ENCODE measurements at regions of chr1 and their contacts with region 1.

Region 1: GRCh38 chr1:46309401-46310159 is 6.1 kb downstream of the UQCRH start:
- DNase-seq: no peak
- ATAC-seq: no peak
- H3K4me3 ChIP-seq: no peak overlapping the region
- H3K27ac ChIP-seq: no peak overlapping the region
- H3K4me1 ChIP-seq: peaks cover 15 to 19% of the 10 kb centered on the region in 2 experiments; a peak in 4 of 5 replicates
- H3K27me3 ChIP-seq: no peaks in the 10 kb centered on the region
- CTCF ChIP-seq: no peak
- EP300 ChIP-seq: no peak
- POLR2A ChIP-seq: no peak
- RAD21 ChIP-seq: no peak

Region 2: DNA sequence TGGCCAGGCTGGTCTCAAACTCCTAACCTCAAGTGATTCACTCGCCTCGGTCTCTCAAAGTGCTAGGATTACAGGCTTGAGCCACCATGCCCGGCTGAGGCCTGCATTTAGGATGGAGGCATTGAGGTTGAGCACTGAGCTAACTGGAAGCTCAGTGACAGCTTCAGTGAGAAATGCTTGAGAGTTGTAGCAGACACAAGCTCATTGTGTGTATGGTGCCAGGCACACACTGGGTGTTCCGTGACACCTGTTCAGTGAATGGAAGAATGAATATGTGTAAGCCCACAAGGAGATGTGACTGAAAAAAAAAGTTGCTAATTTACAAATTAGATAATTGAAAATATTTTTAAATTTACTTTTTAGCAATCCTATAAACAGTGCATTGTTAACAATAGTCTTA is 84.6 kb before region 1 on chr1:
- CTCF ChIA-PET with region 1: no interaction called
- POLR2A ChIA-PET with region 1: no interaction called
- in situ Hi-C with region 1: no loop called
- intact Hi-C with region 1: no loop called
- DNase-seq: no peak
- ATAC-seq: no peak
- H3K4me3 ChIP-seq: no peak overlapping the region
- H3K27ac ChIP-seq: no peak overlapping the region
- H3K4me1 ChIP-seq: no peaks in the 10 kb centered on the region; a peak in 1 of 5 replicates
- H3K27me3 ChIP-seq: no peaks in the 10 kb centered on the region
- CTCF ChIP-seq: no peak
- EP300 ChIP-seq: no peak
- POLR2A ChIP-seq: no peak
- RAD21 ChIP-seq: no peak

Region 3: GRCh38 chr1:46295306-46295705 is 14.3 kb before region 1 on chr1:
- CTCF ChIA-PET with region 1: no interaction called
- POLR2A ChIA-PET with region 1: interaction called, 46 read pairs
- in situ Hi-C with region 1: no loop called
- intact Hi-C with region 1: no loop called
- DNase-seq: no peak
- ATAC-seq: no peak
- H3K4me3 ChIP-seq: no peak overlapping the region
- H3K27ac ChIP-seq: no peak overlapping the region; the same call in 2 of the 3 replicates
- H3K4me1 ChIP-seq: peaks cover 4 to 11% of the 10 kb centered on the region in 2 experiments; a peak in 3 of 5 replicates
- H3K27me3 ChIP-seq: no peaks in the 10 kb centered on the region
- CTCF ChIP-seq: no peak
- EP300 ChIP-seq: no peak
- POLR2A ChIP-seq: no peak
- RAD21 ChIP-seq: no peak